PC-3 (cell line): ENCODE measurements at regions of chr12 and their contacts with region 1.

Region 1: DNA sequence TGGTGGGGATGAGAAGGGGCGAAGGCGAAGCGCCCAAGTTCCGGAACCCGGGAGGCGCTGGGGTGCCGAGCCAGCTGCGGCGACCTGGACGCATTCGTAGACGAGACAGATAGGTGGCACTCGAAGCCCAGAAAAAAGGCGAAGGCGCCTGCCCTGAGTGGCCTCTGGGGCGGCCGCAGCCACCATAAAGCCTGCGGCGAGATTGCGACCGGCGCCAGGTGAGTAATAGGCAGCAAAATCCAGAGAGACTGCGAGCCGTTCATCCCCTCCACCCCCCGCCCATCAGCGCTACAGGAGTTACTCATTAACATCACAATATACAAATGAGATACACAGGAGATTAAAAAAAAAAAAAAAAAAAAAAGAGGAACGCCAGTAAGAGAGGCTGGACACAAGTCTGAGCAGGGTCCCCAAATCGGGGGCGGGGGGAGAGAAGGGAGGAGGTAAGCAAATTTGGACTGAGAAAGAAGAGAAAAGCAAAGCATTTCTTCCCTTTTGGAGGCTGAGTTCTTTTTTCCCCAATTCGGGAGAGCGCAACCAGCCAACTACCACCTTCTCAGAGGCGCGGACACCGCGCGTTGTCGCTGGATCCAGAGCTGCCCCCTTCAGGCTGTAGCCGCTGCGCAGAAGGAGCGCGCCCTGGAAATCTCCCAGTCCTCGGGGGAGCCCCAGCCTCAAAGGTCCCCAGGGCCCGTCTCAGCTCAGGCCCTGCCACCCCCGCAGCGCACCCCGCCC is 15.7 kb downstream of the TBX3 start:
- DNase-seq: peak; percentile 98
- ATAC-seq: peak; percentile 45
- H3K4me3 ChIP-seq: peak overlapping the region; percentile 94
- H3K27ac ChIP-seq: peak overlapping the region; percentile 89
- H3K4me1 ChIP-seq: peaks cover 77% of the 10 kb centered on the region
- H3K27me3 ChIP-seq: no peaks in the 10 kb centered on the region
- CTCF ChIP-seq: peak; percentile 75

Region 2: DNA sequence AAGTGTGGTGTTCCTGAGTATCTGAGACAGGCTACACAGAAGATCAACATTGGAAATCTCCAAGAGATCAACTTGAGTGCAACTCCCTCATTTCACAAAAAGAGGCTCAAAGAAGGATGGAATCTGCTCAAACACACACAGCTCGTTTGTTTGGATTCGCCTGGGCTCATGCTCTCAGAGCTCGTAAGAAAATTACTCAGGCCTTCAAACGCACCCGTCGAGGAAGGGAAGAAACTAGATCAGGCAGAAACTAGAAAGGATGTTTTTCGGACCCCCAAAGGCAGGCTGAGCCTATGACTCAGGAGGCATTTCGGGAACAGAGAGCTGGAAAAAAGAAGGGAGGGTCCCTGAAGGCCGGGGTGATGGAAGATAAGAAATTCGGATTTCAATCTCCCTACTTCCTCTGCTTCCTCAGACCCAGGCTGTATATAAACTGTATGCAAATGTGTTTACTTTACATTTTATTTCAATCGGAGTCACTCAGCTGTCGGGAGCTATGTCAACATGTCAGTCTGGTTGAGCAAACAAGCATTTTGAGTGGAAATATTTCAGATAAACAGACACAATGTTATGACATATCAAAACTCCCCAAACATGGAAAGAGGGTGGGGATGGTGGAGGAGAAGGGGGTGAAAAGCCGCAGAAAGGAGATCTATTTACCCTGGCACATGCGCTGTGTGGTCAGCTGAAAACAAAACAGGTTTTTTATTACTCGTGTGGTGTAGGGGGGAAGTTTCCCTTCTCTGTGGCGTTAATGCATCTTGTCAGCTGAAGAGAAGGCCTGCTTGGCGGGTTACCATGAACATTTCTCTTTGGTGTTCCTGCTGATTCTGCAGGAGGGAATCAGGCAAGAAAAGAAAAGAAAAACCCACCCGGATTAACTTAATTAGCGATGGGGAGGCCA is 144.8 kb after region 1 on chr12:
- CTCF ChIA-PET with region 1: no interaction called
- POLR2A ChIA-PET with region 1: no interaction called
- intact Hi-C with region 1: loop called (anchors 1 kb)
- DNase-seq: peak; percentile 92
- ATAC-seq: peak; percentile 92
- H3K4me3 ChIP-seq: peak overlapping the region; percentile 55
- H3K27ac ChIP-seq: peak overlapping the region; percentile 66
- H3K4me1 ChIP-seq: peaks cover 8% of the 10 kb centered on the region
- H3K27me3 ChIP-seq: no peaks in the 10 kb centered on the region
- CTCF ChIP-seq: no peak

Region 3: GRCh38 chr12:115227137-115227615 is 558.9 kb after region 1 on chr12:
- CTCF ChIA-PET with region 1: no interaction called
- POLR2A ChIA-PET with region 1: no interaction called
- intact Hi-C with region 1: loop called (anchors 1 kb)
- DNase-seq: peak; percentile 98
- ATAC-seq: peak; percentile 95
- H3K4me3 ChIP-seq: no peak overlapping the region
- H3K27ac ChIP-seq: peak overlapping the region; percentile 82
- H3K4me1 ChIP-seq: peaks cover 37% of the 10 kb centered on the region
- H3K27me3 ChIP-seq: no peaks in the 10 kb centered on the region
- CTCF ChIP-seq: no peak

Region 4: DNA sequence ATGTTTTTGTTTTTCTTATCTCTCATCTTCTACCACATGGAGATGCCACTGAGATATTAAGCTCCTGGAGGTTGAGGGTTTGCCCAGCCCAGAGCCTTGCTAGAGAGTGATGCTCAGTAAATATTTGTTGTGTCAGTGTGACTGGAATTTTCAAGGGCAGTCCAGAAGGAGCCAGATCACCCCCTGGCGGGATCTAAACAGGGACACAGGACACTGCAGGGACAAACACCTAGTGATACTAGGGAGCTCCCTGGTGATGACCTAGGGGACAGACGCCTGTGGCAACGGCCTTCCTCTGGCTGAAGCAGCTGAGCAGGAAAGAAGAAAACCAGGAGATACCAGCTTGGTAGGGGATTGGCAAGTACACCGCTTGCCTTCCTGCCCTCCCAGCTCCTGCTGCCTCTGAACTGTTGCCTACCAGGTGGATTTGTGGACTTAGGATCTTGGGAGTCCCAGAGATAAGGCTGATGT is 730.0 kb after region 1 on chr12:
- CTCF ChIA-PET with region 1: interaction called, 9 read pairs
- POLR2A ChIA-PET with region 1: interaction called, 4 read pairs
- intact Hi-C with region 1: loop called (anchors 1 kb)
- DNase-seq: peak; percentile 86
- ATAC-seq: peak; percentile 97
- H3K4me3 ChIP-seq: no peak overlapping the region
- H3K27ac ChIP-seq: no peak overlapping the region
- H3K4me1 ChIP-seq: peaks cover 22% of the 10 kb centered on the region; the same call in 1 of the 2 replicates
- H3K27me3 ChIP-seq: no peaks in the 10 kb centered on the region
- CTCF ChIP-seq: peak; percentile 96

Region 5: DNA sequence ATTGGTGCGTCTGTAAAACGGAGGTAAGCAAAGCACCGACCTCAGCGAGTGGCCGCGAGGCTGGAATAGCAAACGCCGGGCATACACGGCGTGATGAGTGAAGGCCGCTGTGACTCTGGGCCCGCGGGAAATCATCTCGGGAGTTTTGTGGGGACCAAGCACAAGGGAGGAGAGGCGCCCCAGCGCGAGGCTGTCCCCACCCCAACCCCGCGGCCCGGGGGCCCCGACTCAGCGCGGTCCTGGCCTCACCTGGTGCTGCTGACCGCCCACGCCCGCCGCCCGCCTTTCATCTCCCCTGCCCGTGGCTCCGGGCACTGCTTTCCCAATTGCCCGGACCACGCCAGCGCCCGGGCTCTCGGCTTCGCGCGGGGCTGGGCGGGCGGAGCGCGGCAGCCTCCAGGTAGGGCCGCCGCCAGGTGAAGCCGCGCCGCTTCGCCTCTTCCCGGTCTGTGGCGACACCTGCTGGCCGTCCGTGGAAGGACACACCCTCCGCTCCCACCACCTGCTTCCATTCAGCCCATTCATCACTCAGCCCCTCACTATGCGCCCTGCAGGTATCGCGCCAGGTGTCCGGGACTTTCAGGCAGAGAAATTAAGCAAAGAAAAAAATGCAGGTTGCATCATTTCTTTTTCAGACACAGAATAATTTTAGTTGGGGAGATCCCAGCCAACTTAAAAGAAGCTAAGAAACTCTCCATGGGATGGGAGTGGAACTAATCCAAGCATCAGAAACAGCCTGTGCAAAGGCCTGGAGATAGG is 1248.8 kb after region 1 on chr12:
- CTCF ChIA-PET with region 1: no interaction called
- POLR2A ChIA-PET with region 1: no interaction called
- intact Hi-C with region 1: loop called (anchors 1 kb)
- DNase-seq: peak; percentile 83
- ATAC-seq: peak; percentile 94
- H3K4me3 ChIP-seq: peak overlapping the region; percentile 64
- H3K27ac ChIP-seq: no peak overlapping the region
- H3K4me1 ChIP-seq: no peaks in the 10 kb centered on the region
- H3K27me3 ChIP-seq: peaks cover 6% of the 10 kb centered on the region; the same call in 1 of the 2 replicates
- CTCF ChIP-seq: peak; percentile 93